RWPE1 (cell line): ENCODE measurements at regions of chr21 and their contacts with region 1.

Region 1: DNA sequence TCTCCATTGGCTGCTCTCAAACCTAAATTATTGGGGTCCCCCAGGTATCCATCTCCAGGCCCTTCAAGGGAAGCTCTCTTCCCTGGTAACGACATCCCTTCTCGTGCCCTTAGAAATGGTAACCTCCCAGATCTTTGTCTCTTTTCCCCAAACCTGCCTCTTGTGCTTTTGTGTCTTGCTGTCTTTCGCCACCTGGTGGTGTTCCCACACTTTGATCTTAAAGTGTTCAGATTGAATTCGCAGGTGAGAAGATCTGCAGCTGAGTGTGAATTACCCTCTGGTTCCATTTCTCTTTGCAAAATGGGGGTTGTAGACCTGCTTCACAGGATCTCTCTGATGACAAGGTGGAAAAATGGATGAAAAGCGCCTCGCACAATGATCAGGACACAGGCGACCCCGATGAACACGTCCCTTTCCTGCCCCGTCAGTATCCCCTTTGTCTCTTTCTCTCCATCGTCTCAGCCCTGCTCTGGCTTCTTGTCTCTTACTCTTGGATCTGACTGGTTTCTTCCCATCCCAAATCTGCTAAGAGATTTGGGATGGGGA is 53.1 kb downstream of the DOP1B start:
- DNase-seq: peak; percentile 55
- H3K27ac ChIP-seq: peak overlapping the region; percentile 79
- CTCF ChIP-seq: peak; percentile 61

Region 2: DNA sequence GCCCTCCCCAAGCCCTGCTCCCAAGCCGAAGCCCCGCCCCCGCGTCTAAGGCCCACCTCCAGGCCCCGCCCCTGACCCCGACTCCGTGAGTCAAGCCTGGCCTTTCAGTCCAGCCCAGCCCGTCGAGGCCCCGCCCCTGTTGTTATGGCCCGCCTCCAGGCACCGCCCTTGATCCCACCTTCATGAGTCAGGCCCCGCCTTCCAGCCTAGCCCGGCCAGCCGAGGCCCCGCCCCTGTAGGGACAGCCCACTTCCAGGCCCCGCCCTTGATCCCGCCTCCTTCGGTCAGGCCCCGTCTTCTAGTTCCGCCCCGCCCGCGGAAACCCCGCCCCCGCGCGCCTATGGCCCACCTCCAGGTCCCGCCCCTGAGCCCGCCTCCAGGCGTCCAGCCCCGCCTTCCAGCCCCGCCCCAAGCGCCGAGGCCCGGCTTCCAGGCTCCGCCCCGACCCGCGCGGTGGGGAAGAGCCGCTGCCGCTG is 53.3 kb before region 1 on chr21:
- CTCF ChIA-PET with region 1: interaction called, 28 read pairs
- POLR2A ChIA-PET with region 1: no interaction called
- DNase-seq: peak; percentile 98
- H3K27ac ChIP-seq: peak overlapping the region; percentile 69
- CTCF ChIP-seq: no peak

Region 3: DNA sequence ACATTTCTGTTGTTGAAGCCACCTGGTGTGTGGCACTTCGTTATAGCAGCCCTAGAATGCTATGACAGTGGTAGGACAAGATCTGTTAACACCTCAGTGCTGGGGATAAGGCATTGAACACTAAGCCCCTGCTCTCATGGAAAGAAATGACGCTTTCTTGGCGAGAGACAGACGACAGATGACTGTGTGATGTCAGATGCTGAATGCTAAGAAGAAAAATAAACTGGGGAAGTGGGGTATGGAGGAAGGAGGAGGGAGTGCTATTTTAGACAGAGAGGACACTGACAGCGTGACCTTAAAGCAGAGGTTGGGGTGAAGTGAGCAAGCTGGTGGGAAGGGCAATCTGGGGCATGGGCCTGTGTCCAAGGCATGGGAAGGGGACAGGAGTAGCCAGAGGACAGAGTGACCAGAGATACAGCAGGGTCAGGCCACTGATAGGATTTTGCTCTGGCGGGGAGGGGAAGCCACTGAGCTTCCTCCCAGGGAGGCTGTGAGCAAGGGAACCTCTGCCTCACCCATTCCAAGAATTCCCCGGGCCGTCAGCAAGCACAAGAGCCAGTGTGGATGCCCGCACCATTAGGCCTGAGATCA is 37.9 kb before region 1 on chr21:
- CTCF ChIA-PET with region 1: no interaction called
- POLR2A ChIA-PET with region 1: no interaction called
- DNase-seq: no peak
- H3K27ac ChIP-seq: no peak overlapping the region
- CTCF ChIP-seq: no peak

Region 4: GRCh38 chr21:36333271-36333670 is 123.6 kb after region 1 on chr21:
- CTCF ChIA-PET with region 1: no interaction called
- POLR2A ChIA-PET with region 1: interaction called, 10 read pairs
- DNase-seq: no peak
- H3K27ac ChIP-seq: no peak overlapping the region
- CTCF ChIP-seq: no peak